Prostate gland (tissue), 2 donors: ENCODE measurements at regions of chr21 and their contacts with region 1.

Region 1: GRCh38 chr21:25708467-25709065 is 26.1 kb downstream of the ATP5PF start:
- DNase-seq: peak; percentile 36
- H3K4me3 ChIP-seq: no peak overlapping the region
- H3K27ac ChIP-seq: no peak overlapping the region
- H3K4me1 ChIP-seq: no peaks in the 10 kb centered on the region
- H3K27me3 ChIP-seq: no peaks in the 10 kb centered on the region
- CTCF ChIP-seq: peak; percentile 69 to 86 (median 78)
- POLR2A ChIP-seq: no peak

Region 2: GRCh38 chr21:25561668-25562641 is 146.6 kb before region 1 on chr21:
- intact Hi-C with region 1: no loop called
- DNase-seq: no peak
- H3K4me3 ChIP-seq: peak overlapping the region; percentile 38 to 46
- H3K27ac ChIP-seq: peak overlapping the region; percentile 29 to 43
- H3K4me1 ChIP-seq: no peaks in the 10 kb centered on the region
- H3K27me3 ChIP-seq: no peaks in the 10 kb centered on the region
- CTCF ChIP-seq: peak in 1 of 4 experiments; percentile 13
- POLR2A ChIP-seq: no peak

Region 3: DNA sequence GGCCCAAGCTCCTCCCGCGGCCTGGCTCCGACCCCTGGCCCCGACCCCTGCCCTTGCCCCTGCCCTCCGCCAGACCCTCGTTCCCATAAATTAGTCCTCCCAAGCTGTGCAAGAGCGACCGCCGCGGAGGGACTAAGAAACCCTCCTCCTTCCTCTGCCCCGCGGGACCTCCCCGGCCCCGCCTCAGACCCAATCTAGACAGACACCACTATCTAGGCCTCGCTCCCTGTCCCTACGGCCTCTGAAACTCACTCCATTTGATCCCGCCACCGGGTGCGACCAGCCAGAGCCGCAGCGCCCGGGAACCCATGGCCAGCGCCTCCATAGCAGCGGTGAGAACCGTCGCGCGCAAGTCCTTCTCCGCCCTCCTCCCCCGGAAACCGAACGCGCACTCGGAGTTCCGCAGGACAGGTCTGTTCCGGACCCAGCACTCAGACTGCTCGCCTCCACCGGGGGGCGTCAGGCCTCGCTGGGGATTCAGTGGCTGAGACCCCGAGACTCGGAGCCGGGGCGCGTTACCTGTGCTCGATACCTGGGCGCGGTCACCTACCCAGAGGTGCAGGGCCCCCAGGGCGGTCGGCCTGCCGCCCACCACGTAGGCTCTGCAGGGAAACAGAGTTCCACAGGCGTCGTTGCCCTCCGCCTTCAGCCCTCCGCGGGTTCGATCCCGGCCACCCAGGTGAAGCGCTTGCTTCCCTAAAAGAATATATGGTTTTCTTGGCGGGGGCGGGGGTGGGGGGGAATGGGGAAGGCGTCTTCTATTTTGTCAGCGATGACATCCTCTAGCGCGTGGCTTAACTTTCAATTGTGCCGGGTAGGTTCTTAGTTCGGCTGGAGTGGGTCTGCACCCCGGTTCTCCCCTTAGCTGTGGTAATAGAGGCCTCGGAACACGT is 101.2 kb before region 1 on chr21 and contains the start of gene MRPL39:
- intact Hi-C with region 1: loop called (anchors 1 kb)
- DNase-seq: peak; percentile 67
- H3K4me3 ChIP-seq: peak within 1 kb of the TSS; percentile 73 to 75
- H3K27ac ChIP-seq: peak within 1 kb of the TSS; percentile 74 to 82
- H3K4me1 ChIP-seq: no peaks in the 10 kb centered on the region
- H3K27me3 ChIP-seq: no peaks in the 10 kb centered on the region
- CTCF ChIP-seq: peak; percentile 23 to 63 (median 50)
- POLR2A ChIP-seq: no peak
- total RNA-seq, gene MRPL39: 15.4 to 15.8 TPM

Region 4: DNA sequence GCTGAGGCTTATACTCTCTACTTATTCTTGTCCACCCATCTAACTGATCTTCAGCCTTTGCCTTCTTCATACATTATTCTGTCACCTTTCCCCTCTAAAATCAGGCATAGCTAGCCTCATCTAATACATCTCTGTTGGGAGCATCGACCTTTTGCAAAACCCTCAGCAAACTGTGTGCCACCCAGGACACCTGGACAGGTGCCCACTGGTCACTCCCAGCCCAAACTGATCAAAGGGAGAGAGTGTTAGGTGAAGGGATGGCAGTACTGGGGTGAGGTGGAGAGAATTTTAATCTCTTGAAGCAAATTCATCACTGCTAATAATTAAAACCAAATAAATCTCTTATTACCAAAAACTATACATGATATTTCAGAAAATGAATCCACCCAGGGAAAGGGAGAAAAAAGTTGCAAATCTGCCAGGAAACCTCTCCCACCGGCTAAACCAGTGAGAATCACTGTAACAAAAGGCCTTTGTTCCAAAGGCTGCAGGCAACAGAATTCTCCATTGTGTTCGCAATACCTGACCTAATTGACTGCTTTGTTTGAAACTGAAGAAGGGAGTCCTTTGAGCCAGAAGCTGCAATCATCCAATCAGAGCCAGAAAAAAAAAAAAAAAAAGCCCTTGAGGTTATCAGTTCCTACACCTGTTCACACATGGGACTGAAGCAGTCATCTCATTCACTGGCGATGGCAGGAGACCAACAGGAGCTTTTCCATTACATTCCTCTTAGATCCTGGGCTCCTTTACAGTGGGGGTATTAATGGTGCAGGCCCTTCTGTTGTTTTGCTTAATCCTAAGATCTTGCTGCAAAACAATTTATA is 289.4 kb after region 1 on chr21:
- intact Hi-C with region 1: no loop called
- DNase-seq: peak; percentile 17
- H3K4me3 ChIP-seq: no peak overlapping the region
- H3K27ac ChIP-seq: no peak overlapping the region
- H3K4me1 ChIP-seq: no peaks in the 10 kb centered on the region
- H3K27me3 ChIP-seq: no peaks in the 10 kb centered on the region
- CTCF ChIP-seq: no peak
- POLR2A ChIP-seq: no peak